ENCODE measurements at regions of chr1 and their contacts with region 1.

Region 1: DNA sequence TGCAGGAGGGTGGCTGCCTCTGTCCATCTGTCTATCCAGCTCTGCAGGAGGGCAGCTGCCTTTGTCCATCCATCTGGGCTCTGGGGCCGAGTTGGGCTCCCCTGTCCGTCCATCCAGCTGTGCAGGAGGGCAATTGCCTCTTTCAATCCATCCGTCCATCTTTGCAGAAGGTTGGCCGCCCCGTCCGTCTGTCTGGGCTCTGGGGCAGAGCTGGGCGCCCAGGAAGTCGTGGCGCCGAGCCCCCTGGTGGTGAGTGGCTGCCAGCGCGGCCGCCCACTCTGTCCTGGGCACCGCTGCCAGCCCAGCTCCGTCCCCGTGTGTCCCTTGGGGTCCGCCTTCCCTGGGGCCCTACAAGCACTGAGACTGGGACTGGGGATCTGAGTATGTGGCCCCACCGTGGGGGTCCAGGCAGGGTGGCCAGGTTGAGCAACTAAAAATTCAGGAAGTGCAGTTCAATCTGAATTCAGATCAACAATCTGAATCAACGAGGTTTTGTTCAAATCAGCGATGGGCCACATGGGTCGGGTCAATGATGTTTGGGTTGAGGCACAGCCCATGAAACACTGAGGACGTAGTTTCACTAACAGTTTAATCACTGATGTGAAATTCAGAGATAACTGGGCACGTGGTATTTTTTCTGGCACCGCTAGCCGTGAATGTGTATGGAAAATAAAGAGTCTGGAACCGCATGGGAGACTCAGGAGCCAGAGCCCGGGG is 99.1 kb upstream of the ACTRT2 start:
- DNase-seq: no peak
- ATAC-seq: peak; percentile 91
- H3K4me3 ChIP-seq: no peak overlapping the region
- H3K27ac ChIP-seq: no peak overlapping the region
- H3K4me1 ChIP-seq: no peaks in the 10 kb centered on the region
- H3K27me3 ChIP-seq: peaks cover 3% of the 10 kb centered on the region; the same call in 1 of the 2 replicates
- CTCF ChIP-seq: peak; percentile 93

Region 2: DNA sequence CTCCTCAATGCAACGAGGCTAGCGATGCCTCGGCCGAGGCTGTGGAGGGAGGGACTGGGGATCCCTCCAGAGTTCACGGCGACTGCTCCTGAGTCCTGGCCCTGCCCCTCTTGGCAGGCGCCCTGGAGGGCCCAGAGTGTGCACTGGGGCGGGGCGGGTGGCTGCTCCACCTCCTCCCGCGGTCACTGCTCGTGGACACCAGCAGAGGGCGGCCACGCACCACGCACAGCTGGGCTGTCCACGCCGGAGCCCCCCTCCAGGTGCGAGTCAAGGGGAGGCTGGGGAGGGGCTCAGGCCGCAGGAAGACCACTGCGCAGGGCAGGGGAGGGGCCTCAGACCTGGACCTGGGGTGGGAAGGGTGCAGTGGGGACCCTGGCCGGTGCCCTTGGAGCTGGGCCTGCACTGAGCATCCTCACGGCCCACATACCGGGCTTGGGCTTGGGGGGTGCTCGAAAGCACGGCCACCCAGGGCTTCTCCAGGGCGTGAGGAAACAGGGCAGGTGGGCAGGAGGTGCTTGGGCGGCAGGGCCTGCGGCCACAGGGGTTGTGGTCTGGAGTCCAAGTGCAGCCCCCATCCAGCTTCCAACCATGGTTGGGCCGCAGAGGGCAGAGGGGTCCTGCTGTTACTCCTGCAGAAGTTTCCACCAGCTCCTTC is 100.0 kb before region 1 on chr1:
- CTCF ChIA-PET with region 1: interaction called, 7 read pairs
- POLR2A ChIA-PET with region 1: no interaction called
- in situ Hi-C with region 1: no loop called
- intact Hi-C with region 1: loop called (anchors 10 kb)
- DNase-seq: no peak
- ATAC-seq: peak; percentile 90
- H3K4me3 ChIP-seq: no peak overlapping the region
- H3K27ac ChIP-seq: no peak overlapping the region
- H3K4me1 ChIP-seq: no peaks in the 10 kb centered on the region; the same call in 1 of the 2 replicates
- H3K27me3 ChIP-seq: peaks cover 5% of the 10 kb centered on the region; the same call in 1 of the 2 replicates
- CTCF ChIP-seq: peak; percentile 92

Region 3: GRCh38 chr1:2866422-2867086 is 55.6 kb before region 1 on chr1:
- CTCF ChIA-PET with region 1: no interaction called
- POLR2A ChIA-PET with region 1: no interaction called
- in situ Hi-C with region 1: no loop called
- intact Hi-C with region 1: no loop called
- DNase-seq: no peak
- ATAC-seq: no peak
- H3K4me3 ChIP-seq: no peak overlapping the region
- H3K27ac ChIP-seq: no peak overlapping the region
- H3K4me1 ChIP-seq: no peaks in the 10 kb centered on the region
- H3K27me3 ChIP-seq: peaks cover 2% of the 10 kb centered on the region; the same call in 1 of the 2 replicates
- CTCF ChIP-seq: no peak

Region 4: GRCh38 chr1:3577711-3578432 is 655.7 kb after region 1 on chr1:
- CTCF ChIA-PET with region 1: interaction called, 11 read pairs
- POLR2A ChIA-PET with region 1: no interaction called
- in situ Hi-C with region 1: no loop called
- intact Hi-C with region 1: no loop called
- DNase-seq: no peak
- ATAC-seq: 0 out of 2 replicates have a peak, but pooled peaks have one; percentile 32
- H3K4me3 ChIP-seq: no peak overlapping the region
- H3K27ac ChIP-seq: no peak overlapping the region
- H3K4me1 ChIP-seq: peaks cover 9% of the 10 kb centered on the region
- H3K27me3 ChIP-seq: no peaks in the 10 kb centered on the region
- CTCF ChIP-seq: no peak

Measured in Panc1 (cell line).